ENCODE measurements at regions of chr1 and their contacts with region 1.

Region 1: DNA sequence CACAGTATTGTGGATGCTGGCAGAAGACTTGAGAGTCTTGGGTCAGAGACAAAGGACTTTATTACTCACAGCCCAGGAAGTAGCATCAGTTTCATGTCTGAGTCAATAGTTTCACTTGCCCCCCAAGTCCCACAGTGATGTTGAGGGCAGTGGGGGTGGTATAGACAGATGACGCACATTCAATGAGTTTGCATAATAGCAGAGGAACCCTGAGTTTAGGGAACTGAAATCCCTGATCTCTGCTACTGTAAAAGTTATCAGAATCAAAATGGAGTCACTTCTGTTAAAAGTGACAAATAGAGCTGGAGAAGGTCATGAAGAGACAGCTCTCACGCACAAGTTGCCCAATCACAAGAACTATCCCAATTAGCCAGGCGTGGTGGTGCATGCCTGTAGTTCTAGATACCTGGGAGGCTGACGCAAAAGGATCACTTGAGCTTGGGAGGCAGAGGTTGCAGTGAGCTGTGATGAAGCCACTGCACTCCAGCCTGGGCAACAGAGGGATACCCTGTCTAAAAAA is 11.5 kb upstream of the HCRTR1 start:
- DNase-seq: peak; percentile 96
- ATAC-seq: peak; percentile 98
- H3K4me3 ChIP-seq: no peak overlapping the region
- H3K27ac ChIP-seq: peak overlapping the region; percentile 47
- H3K4me1 ChIP-seq: peaks cover 11% of the 10 kb centered on the region
- H3K27me3 ChIP-seq: no peaks in the 10 kb centered on the region
- CTCF ChIP-seq: no peak
- EP300 ChIP-seq: peak; percentile 92 to 98
- POLR2A ChIP-seq: no peak
- RAD21 ChIP-seq: no peak

Region 2: GRCh38 chr1:31272369-31272768 is 333.6 kb before region 1 on chr1:
- CTCF ChIA-PET with region 1: no interaction called
- POLR2A ChIA-PET with region 1: no interaction called
- RAD21 ChIA-PET with region 1: no interaction called
- SMC1A ChIA-PET with region 1: no interaction called
- in situ Hi-C with region 1: no loop called
- intact Hi-C with region 1: no loop called
- DNase-seq: no peak
- ATAC-seq: no peak
- H3K4me3 ChIP-seq: no peak overlapping the region
- H3K27ac ChIP-seq: no peak overlapping the region
- H3K4me1 ChIP-seq: no peaks in the 10 kb centered on the region
- H3K27me3 ChIP-seq: no peaks in the 10 kb centered on the region
- CTCF ChIP-seq: no peak
- EP300 ChIP-seq: no peak
- POLR2A ChIP-seq: no peak
- RAD21 ChIP-seq: no peak

Region 3: GRCh38 chr1:31593770-31594632 is 12.0 kb before region 1 on chr1:
- CTCF ChIA-PET with region 1: interaction called, 10 read pairs
- POLR2A ChIA-PET with region 1: interaction called, 6 read pairs
- RAD21 ChIA-PET with region 1: interaction called, 5 read pairs
- SMC1A ChIA-PET with region 1: interaction called, 17 read pairs
- in situ Hi-C with region 1: no loop called
- intact Hi-C with region 1: no loop called
- DNase-seq: peak; percentile 26
- ATAC-seq: peak; percentile 100
- H3K4me3 ChIP-seq: no peak overlapping the region
- H3K27ac ChIP-seq: no peak overlapping the region
- H3K4me1 ChIP-seq: no peaks in the 10 kb centered on the region; the same call in 1 of the 2 replicates
- H3K27me3 ChIP-seq: no peaks in the 10 kb centered on the region
- CTCF ChIP-seq: peak; percentile 90 to 97 (median 97)
- EP300 ChIP-seq: no peak
- POLR2A ChIP-seq: no peak
- RAD21 ChIP-seq: peak; percentile 67

Region 4: GRCh38 chr1:31855038-31855845 is 249.3 kb after region 1 on chr1:
- CTCF ChIA-PET with region 1: no interaction called
- POLR2A ChIA-PET with region 1: no interaction called
- RAD21 ChIA-PET with region 1: no interaction called
- SMC1A ChIA-PET with region 1: no interaction called
- in situ Hi-C with region 1: no loop called
- intact Hi-C with region 1: no loop called
- DNase-seq: no peak
- ATAC-seq: no peak
- H3K4me3 ChIP-seq: no peak overlapping the region
- H3K27ac ChIP-seq: no peak overlapping the region
- H3K4me1 ChIP-seq: no peaks in the 10 kb centered on the region
- H3K27me3 ChIP-seq: no peaks in the 10 kb centered on the region
- CTCF ChIP-seq: no peak
- EP300 ChIP-seq: no peak
- POLR2A ChIP-seq: no peak
- RAD21 ChIP-seq: no peak